ENCODE measurements at regions of chr9 and their contacts with region 1.

Region 1: GRCh38 chr9:76321205-76321828 is 72.9 kb downstream of the RFK start:
- DNase-seq: no peak

Region 2: GRCh38 chr9:76393963-76394679 is 72.8 kb after region 1 on chr9 and contains the start of gene RFK:
- intact Hi-C with region 1: loop called in 1 of 2 experiments (anchors 10 kb)
- DNase-seq: peak; percentile 98
- total RNA-seq, gene RFK: 18.3 to 22.1 TPM

Region 3: DNA sequence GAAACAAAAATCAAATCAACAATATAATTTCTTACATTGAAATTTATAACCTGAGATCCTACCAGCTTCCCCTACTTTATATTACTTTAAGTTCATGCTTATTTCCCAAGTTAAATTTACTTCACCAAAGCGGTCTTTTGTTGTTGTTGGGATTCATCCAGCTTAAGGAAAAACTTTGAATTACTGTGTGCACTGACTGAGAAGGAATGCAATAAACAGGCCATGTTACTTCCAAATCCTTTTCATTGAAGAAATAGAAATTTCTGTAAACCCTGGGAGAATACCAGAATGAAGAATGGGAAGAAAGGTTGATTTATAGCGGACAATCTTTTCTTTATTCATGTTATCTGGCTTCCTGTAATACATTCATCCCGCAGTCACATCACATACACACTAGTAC is 451.7 kb after region 1 on chr9:
- intact Hi-C with region 1: no loop called
- DNase-seq: no peak